ENCODE measurements at regions of chr12 and their contacts with region 1.

Region 1: GRCh38 chr12:4307593-4308333 is 13.2 kb upstream of the TIGAR start:
- DNase-seq: peak; percentile 71
- H3K4me3 ChIP-seq: no peak overlapping the region
- H3K27ac ChIP-seq: no peak overlapping the region
- H3K4me1 ChIP-seq: no peaks in the 10 kb centered on the region
- H3K27me3 ChIP-seq: peaks cover 7 to 10% of the 10 kb centered on the region in 2 experiments
- CTCF ChIP-seq: peak; percentile 64 to 73
- POLR2A ChIP-seq: no peak

Region 2: GRCh38 chr12:4526923-4527546 is 219.3 kb after region 1 on chr12:
- CTCF ChIA-PET with region 1: interaction called, 5 read pairs
- POLR2A ChIA-PET with region 1: no interaction called
- dilution Hi-C with region 1: no loop called
- intact Hi-C with region 1: loop called (anchors 1 kb)
- DNase-seq: peak; percentile 20
- H3K4me3 ChIP-seq: no peak overlapping the region
- H3K27ac ChIP-seq: no peak overlapping the region
- H3K4me1 ChIP-seq: no peaks in the 10 kb centered on the region
- H3K27me3 ChIP-seq: no peaks in the 10 kb centered on the region
- CTCF ChIP-seq: peak in 1 of 2 donors; percentile 20
- POLR2A ChIP-seq: no peak

Region 3: DNA sequence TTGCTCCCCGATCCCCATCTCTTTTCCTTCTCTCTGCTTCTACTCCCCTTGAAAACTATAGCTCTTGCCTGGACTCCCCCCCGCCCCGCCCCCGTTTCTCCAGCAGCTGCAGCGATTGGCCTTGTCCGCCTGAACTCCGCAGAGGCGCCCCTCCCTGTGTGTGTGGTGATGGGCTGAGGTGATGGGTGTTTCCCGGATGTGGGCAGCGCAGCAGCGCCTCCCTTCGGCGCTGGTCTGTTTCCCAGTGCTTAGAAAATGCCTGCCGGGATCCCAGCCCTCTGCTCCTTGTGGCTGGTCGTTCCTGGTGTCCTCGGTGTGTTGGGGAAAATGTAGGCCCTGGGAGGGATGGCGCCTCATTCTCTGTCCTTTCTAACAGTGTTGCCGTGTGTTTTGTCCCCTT is 455.8 kb after region 1 on chr12:
- CTCF ChIA-PET with region 1: interaction called, 5 read pairs
- POLR2A ChIA-PET with region 1: no interaction called
- dilution Hi-C with region 1: no loop called
- intact Hi-C with region 1: loop called (anchors 1 kb)
- DNase-seq: no peak
- H3K4me3 ChIP-seq: no peak overlapping the region
- H3K27ac ChIP-seq: no peak overlapping the region
- H3K4me1 ChIP-seq: no peaks in the 10 kb centered on the region
- H3K27me3 ChIP-seq: peaks cover 0 to 2% of the 10 kb centered on the region in 2 experiments
- CTCF ChIP-seq: no peak
- POLR2A ChIP-seq: no peak